AG04449 (cell line): ENCODE measurements at regions of chr12 and their contacts with region 1.

Region 1: DNA sequence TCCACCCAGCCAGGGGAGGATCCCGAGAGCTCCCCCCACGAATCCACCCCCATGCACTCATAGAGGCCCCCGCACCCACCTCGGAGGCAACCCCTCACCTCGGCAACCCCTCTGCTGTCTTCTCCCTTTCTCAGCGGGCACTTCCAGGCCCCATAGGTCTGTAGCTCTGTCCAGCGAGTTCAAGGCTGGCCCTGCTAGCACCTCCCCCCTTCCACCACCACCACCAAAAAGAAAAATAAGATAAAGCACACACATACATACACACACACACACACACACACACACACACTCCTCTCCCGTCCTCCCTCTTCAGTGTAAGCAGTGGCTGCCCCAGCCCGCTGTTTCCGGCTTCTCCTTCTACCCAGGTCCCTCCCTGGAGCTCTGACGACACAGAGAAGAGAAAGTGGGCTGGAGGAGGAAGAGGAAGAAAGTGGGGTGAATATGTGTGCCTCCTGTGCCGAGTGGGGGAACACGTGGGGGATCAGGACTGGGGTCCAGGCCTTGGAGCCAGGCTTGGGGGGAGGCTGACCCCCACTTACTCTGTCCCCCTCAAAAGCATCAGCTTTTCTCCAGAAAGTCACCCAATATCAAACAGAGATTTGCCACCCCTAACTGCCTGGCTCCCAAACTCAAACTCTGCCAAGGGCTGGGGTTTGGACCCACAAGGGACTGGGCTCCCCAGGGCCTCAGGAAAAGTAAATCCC is at the start of gene STAT6:
- DNase-seq: no peak
- H3K4me3 ChIP-seq: peak within 1 kb of the TSS; percentile 73
- CTCF ChIP-seq: no peak

Region 2: GRCh38 chr12:57063991-57064685 is 47.0 kb before region 1 on chr12:
- CTCF ChIA-PET with region 1: interaction called, 148 read pairs
- POLR2A ChIA-PET with region 1: interaction called, 24 read pairs
- DNase-seq: no peak
- H3K4me3 ChIP-seq: no peak overlapping the region
- CTCF ChIP-seq: no peak

Region 3: GRCh38 chr12:57088459-57089248 is 22.5 kb before region 1 on chr12 and contains the start of gene NAB2:
- CTCF ChIA-PET with region 1: interaction called, 218 read pairs
- POLR2A ChIA-PET with region 1: interaction called, 81 read pairs
- DNase-seq: peak; percentile 82
- H3K4me3 ChIP-seq: peak within 1 kb of the TSS; percentile 91
- CTCF ChIP-seq: no peak

Region 4: DNA sequence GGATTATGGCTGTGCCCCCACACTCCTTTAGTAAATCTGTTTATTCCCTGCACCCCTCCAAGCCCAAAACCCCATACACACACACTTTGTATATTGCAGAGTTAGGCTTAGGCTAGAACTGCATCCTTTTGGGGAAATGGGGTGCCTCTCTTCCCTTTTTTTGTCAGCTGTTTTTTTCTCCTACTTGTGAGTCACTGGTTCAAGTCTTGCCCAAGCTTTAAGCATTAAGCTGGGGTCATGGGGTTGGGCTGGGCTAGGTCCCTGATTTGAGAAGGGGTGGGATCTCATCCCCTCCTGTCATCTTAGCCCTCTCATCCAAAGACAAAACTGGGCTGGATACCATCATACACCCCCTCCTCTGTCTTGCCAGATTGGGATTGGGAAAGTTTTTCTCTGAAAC is 18.7 kb after region 1 on chr12:
- CTCF ChIA-PET with region 1: interaction called, 160 read pairs
- POLR2A ChIA-PET with region 1: interaction called, 23 read pairs
- DNase-seq: no peak
- H3K4me3 ChIP-seq: peak overlapping the region; percentile 87
- CTCF ChIP-seq: no peak

Region 5: DNA sequence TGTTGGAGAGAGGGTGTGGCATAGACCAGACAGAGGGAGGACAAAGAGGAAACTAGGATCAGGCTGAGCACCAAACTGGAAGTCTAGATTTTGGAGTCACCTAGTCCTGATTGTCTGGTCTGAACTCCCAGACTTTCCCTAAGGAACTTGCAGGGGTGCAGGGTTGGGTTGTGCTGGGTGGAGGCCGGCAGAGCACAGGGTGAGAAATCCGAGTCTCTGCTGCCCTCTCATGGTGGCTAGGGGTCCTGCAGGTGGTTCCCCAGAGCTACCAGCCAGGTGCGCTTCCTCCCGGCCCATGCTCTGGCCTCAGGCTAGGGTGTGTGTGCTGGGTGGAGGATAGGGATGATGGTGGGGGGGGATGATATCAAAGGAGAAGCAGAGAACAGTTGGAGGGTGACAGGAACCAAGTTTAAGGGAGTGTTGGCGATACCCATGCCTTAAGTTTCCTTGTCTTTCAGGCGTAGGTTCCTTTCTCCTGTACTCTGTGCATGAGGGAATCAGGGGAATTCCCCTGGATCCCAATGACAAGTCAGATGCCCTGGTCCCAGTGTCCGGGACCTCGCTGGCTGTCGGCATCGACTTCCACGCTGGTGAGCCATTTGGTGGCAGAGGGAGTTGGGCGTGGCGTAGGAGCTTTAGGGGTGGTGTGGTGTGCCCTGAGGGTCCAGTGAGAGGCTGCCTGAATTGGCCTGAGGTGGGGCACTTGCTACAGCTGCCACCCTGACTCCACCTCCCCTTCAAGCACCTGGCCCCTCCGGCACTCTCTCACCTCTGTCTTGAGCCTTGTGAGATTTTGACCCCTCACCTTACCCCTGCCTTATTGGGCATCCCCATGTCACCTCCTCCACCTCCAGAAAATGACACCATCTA is 72.0 kb after region 1 on chr12:
- CTCF ChIA-PET with region 1: interaction called, 874 read pairs
- POLR2A ChIA-PET with region 1: interaction called, 5 read pairs
- DNase-seq: no peak
- H3K4me3 ChIP-seq: no peak overlapping the region
- CTCF ChIP-seq: peak; percentile 92

Region 6: DNA sequence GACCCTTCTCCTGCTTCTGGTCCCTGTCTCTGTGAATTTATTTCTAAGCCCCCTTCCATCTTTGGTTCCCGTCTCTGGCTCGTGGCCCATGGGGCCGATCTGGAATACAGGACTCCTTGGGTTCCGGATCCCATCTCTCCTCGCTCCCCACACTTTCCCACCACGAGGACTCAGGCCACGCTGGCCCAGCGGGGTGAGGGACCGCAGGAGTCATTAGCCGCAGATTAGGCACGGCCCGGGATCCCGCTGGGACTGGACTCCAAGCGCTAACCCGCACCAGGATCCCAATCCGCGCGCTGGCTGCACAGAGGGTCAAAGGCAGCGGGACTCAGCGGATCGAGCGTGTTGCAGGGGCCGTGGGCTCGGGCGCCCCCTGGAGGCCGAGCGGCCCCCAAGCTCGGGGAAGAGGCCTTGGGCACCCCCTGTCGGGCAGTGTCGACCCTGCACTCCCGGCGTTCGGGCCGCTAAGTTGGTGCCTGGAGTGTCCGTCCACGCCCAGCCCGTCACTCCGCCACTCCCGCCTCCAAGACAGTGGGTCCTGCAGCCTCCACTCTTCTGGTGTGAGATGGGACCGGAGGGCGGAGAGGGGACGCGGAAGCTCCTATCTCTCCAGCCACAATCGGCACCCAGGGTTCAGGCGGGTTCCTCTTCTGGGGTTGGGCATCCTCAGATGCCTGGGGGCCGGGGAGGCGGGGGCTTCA is 127.8 kb after region 1 on chr12:
- CTCF ChIA-PET with region 1: interaction called, 19 read pairs
- POLR2A ChIA-PET with region 1: interaction called, 3 read pairs
- DNase-seq: no peak
- H3K4me3 ChIP-seq: peak overlapping the region; percentile 69
- CTCF ChIP-seq: peak; percentile 100

Region 7: DNA sequence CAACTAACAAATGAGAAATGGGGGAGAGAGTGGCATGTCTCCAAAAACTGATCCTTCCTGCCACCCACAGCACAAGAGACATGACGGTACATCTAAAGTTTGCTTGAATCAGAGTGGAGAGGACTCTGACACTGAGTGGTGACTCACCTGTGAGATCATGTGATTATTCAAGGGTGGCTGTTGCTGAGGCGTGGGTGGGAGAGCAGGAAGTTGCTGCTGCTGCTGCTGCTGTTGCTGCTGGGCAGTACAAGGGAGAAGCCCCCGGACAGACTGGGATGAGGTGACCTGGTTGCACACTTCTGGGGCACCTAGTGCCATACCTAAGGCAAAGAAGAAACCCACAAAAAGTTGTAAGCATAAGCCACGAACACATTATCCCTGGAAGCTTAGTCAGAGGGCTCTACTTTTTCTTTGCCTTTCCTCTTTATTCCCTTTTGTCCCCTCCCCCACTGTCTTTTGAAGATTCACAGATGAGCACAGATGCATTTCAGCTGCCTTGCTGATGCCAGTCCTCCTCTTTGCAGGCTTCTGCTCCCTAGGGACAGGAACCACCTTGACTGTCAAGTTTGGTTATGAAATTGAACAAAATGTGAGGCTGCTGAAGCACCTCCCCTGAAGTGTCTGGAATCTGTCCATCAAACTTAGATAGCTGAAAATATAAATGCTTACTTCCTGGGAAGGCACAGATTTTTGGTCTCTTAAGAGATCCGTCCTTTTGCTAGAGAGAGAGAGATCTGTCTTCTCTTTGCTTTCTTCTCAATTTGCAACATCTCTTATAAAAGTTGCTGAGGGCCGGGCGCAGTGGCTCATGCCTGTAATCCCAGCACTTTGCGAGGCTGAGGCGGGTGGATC is 169.3 kb after region 1 on chr12:
- CTCF ChIA-PET with region 1: no interaction called
- POLR2A ChIA-PET with region 1: no interaction called
- DNase-seq: peak; percentile 79
- H3K4me3 ChIP-seq: no peak overlapping the region
- CTCF ChIP-seq: no peak